CD8-positive, alpha-beta memory T cell (primary cell): ENCODE measurements at regions of chr12 and their contacts with region 1.

Region 1: DNA sequence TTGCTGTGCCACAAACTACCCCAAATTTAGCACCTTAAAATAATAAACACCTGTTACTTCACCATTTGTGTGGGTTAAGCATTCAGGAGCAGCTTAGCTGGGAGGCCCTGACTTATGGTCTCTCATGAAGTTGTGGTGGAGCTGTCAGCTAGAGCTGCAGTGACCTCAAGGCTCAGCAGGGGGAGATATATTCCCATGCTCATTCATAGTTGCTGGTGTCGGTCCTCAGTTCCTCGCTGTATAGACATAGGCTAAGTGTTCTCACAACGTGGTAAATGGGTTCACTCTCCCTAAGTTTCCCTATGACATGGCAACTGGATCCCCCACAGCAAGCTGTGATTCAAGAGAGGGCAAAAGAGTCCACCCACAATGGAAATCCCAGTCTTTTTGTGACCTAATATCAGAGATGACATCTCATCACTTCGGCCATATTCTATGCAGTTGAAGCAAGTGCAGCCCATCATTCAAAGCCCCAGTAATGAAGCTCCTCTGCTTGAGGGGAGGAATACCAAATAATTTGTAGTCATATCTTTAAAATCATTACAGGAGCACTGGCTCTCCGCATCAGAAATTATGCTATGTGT is 41.1 kb downstream of the PRB3 start:
- DNase-seq: peak in 3 of 5 donors; percentile 3 to 45 (median 7)
- H3K4me3 ChIP-seq: no peak overlapping the region
- H3K4me3 Mint-ChIP-seq: no peak overlapping the region
- H3K27ac ChIP-seq: no peak overlapping the region
- H3K27ac Mint-ChIP-seq: no peak overlapping the region
- H3K4me1 ChIP-seq: no peaks in the 10 kb centered on the region
- H3K4me1 Mint-ChIP-seq: no peaks in the 10 kb centered on the region
- H3K27me3 ChIP-seq: no peaks in the 10 kb centered on the region
- H3K27me3 Mint-ChIP-seq: peaks cover 0 to 1% of the 10 kb centered on the region in 2 donors

Region 2: DNA sequence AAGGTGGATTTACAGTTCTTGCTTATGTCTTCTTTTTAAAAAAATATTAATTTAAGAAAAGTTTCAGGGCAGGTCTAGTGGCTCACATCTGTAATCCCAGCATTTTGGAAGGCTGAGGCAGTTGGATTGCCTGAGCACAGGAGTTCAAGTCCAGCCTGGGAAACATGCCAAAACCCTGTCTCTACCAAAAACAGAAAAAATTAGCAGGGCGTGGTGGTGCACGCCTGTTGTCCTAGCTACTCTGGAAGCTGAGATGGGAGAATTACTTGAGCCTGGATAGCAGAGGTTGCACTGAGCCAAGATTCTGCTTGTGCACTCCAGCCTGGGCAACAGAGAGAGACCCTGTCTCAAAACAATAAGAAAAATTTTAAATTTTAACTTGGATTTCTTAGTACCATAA is 160.9 kb before region 1 on chr12:
- CTCF ChIA-PET with region 1: no interaction called
- POLR2A ChIA-PET with region 1: no interaction called
- DNase-seq: no peak
- H3K4me3 ChIP-seq: no peak overlapping the region
- H3K4me3 Mint-ChIP-seq: no peak overlapping the region
- H3K27ac ChIP-seq: no peak overlapping the region
- H3K27ac Mint-ChIP-seq: no peak overlapping the region
- H3K4me1 ChIP-seq: no peaks in the 10 kb centered on the region
- H3K4me1 Mint-ChIP-seq: peaks cover 13 to 15% (median 14%) of the 10 kb centered on the region in 3 donors
- H3K27me3 ChIP-seq: no peaks in the 10 kb centered on the region
- H3K27me3 Mint-ChIP-seq: peaks cover 0 to 4% of the 10 kb centered on the region in 2 donors

Region 3: GRCh38 chr12:11486623-11487444 is 258.4 kb after region 1 on chr12:
- CTCF ChIA-PET with region 1: interaction called, 12 read pairs
- POLR2A ChIA-PET with region 1: no interaction called
- DNase-seq: peak; percentile 63 to 84 (median 73)
- H3K4me3 ChIP-seq: no peak overlapping the region
- H3K4me3 Mint-ChIP-seq: no peak overlapping the region
- H3K27ac ChIP-seq: no peak overlapping the region
- H3K27ac Mint-ChIP-seq: peak overlapping the region in 1 of 8 donors; percentile 1
- H3K4me1 ChIP-seq: peaks cover 3% of the 10 kb centered on the region
- H3K4me1 Mint-ChIP-seq: peaks cover 4 to 7% (median 6%) of the 10 kb centered on the region in 3 donors
- H3K27me3 ChIP-seq: no peaks in the 10 kb centered on the region
- H3K27me3 Mint-ChIP-seq: peaks cover 2 to 39% of the 10 kb centered on the region in 2 donors